Head of caudate nucleus (tissue), 42 donors: ENCODE measurements at regions of chr13 and their contacts with region 1.

Region 1: DNA sequence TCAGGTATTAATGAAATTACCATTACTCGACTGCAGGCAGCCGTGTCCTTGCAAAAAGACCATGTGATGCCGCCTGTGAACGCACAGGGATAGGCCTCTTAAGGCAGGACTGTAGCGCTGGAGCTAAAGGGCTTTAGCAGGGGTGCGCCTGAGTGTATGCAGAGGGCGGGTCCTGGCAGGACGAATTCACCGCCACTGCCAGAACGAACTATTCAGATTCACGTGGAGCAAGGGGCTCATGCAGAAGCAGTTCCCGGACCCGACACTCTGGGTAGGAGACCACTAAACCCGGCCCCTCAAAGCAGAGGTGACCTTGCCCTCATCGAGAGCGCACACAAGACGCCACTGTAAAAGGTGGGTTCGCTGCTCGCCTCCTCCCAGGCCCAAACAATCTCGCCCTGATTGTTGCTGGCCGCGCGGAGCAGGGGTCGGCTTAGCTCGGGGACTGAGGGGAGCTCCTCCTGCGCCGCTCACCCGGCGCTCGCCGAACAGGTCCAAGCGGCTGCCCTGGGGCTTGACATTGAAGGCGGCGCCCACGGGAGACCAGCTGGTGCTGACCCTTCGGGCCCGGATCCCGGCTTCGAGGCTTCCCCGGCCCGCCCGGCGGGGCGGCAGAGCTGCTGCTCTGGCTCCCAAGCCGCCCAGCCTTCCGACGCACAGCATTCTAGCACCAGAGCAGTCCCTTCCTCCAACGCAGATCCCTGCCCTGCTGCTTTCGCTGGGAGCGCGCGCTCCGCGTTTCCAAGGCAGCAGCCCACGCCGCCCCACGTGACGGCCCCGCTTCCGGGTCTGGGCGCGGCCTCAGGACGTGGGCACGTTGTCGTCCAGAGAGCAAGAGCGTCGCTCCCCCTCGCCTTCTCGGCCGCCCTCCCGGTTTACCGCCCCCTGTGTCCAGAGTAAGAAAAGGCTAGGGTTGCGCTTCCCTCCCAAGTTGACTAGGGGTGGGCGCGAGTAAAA is at the start of gene MIPEP:
- DNase-seq: peak; percentile 88 to 98 (median 95)

Region 2: GRCh38 chr13:23466144-23467002 is 422.6 kb before region 1 on chr13:
- intact Hi-C with region 1: loop called (anchors 5 kb)
- DNase-seq: peak; percentile 59 to 90 (median 80)

Region 3: DNA sequence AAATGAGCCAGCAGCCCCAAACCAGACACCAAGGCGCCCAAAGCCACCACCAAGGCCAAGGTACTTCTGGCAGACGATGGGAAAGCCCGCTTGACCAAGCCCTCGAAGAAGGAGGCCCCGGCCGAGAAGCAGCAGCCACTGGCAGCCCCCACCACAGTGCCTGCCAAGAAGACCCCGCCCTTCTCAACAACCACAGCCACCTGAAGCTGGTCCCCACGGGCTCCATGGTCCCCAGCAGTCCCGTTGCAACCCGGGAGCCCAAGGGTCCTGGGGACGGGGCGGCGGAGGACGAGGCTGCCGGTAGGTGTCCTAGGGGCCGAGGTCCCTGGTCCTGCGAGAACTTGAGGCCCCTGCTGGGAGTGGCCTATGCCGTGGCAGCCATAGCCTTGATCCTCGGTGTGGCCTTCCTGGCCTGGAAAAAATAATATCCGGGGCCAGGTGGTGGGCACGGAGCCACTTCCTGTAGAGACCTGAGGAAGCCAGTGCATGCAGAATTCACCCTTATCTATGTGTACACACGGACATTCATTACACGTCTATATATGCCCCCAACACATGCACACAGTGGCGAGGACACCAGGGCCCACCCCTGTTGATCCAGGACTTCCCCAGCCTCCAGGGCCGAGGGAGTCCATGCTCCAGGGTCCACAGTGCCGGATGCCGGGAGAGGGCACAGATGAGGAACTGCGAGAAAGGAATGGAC is 434.3 kb after region 1 on chr13:
- intact Hi-C with region 1: loop called (anchors 5 kb)
- DNase-seq: no peak